ENCODE measurements at regions of chr21 and their contacts with region 1.

Region 1: DNA sequence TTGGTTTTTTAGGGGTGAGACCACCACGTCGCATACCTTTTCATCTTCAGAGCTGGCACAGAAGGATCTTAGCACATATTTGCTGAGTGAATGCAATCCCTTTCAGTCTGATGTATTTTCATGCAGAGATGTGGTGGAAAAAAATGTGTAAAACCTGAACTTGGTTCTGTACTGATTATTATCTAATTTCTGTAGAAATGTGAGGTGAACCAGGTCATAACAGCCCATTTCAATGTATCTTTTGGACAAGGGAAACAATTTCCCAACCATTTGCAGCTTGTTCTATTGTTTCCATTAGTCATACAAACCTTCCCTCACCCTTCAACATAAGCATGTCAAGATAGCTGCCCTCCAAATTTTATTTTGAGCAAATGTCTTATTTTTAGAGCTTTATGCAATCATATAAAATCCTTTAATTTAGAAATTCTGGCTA is 46.8 kb upstream of the RUNX1 start:
- DNase-seq: no peak
- H3K4me3 Mint-ChIP-seq: no peak overlapping the region
- H3K27ac Mint-ChIP-seq: peak overlapping the region; percentile 67
- H3K4me1 Mint-ChIP-seq: peaks cover 42% of the 10 kb centered on the region
- H3K27me3 Mint-ChIP-seq: no peaks in the 10 kb centered on the region

Region 2: DNA sequence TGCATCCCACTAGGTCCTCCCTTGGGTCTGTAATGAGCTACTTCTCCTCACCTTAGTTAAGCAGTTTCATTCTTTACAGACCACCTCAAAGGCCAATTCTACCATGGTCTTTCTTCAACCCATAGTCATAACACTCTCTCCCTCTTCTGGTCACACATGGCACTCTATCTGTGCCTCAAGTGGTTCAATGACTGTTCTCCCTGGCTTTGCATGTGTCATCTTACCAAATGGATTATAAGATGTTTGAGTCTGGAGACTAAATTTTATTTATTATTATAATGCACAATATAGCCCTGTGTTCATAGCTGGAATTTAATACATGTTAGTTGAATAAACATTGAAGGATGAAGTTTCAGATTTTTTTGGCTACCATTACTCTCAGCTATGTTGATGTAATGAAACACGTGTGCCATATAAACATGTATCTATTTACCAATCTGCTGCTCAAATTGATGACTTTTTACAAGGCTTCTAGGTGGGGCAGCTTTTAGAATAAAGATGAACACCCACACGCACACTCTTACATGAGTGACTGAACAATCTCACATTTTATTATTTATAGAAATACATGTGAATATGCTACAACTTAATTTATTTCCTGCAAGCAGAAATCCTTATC is 148.8 kb before region 1 on chr21:
- intact Hi-C with region 1: loop called (anchors 2 kb)
- DNase-seq: no peak
- H3K4me3 Mint-ChIP-seq: no peak overlapping the region
- H3K27ac Mint-ChIP-seq: peak overlapping the region; percentile 90
- H3K4me1 Mint-ChIP-seq: peaks cover 62% of the 10 kb centered on the region
- H3K27me3 Mint-ChIP-seq: no peaks in the 10 kb centered on the region

Region 3: DNA sequence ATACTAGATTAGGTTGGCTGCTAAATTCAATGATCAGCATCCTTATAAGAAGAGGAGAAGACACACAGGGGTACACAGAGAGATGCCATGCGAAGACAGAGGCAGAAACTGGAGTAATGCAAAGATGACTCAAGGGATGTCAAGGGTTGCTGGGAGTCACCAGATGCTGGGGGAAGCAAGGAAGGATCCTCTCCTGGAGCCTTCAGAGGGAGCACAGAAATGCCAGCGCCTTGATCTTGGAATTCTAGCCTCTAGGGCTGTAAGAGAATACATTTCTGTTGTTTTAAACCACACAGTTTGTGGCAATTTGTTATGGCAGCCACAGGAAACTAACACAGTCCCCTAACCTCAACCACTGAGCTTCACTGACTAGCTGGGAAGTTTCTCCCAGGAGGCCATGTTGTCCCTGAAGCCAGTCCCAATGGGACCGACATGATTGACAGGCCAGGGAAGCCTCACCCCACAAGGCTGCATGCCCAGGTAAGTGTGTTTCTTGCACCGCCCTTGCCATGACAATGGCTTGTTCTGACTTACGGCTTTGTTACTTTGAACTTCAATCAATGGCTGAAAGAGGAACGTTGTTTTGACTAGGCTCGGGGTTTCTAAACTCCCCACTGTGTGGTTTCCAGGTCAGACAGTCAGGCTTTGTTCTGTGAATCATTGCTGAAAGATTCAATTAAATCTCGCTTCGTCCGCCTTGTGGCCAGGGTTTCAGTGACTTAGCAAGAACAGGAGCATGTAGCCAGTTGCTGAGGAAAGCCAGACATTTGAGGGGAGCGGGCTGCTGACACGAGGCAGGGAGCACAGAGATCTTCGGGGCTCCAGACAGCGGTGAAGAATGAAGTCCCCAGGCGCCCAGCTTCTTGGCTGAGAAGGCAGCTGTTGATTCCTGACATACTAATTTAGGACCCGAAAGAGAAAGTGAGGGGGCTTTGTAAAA is 109.0 kb before region 1 on chr21:
- intact Hi-C with region 1: loop called (anchors 2 kb)
- DNase-seq: peak; percentile 70
- H3K4me3 Mint-ChIP-seq: peak overlapping the region; percentile 62
- H3K27ac Mint-ChIP-seq: peak overlapping the region; percentile 97
- H3K4me1 Mint-ChIP-seq: peaks cover 92% of the 10 kb centered on the region
- H3K27me3 Mint-ChIP-seq: no peaks in the 10 kb centered on the region

Region 4: GRCh38 chr21:35138665-35139381 is 42.9 kb after region 1 on chr21:
- intact Hi-C with region 1: loop called (anchors 1 kb)
- DNase-seq: no peak
- H3K4me3 Mint-ChIP-seq: peak overlapping the region; percentile 62
- H3K27ac Mint-ChIP-seq: peak overlapping the region; percentile 93
- H3K4me1 Mint-ChIP-seq: peaks cover 27% of the 10 kb centered on the region
- H3K27me3 Mint-ChIP-seq: no peaks in the 10 kb centered on the region

Region 5: DNA sequence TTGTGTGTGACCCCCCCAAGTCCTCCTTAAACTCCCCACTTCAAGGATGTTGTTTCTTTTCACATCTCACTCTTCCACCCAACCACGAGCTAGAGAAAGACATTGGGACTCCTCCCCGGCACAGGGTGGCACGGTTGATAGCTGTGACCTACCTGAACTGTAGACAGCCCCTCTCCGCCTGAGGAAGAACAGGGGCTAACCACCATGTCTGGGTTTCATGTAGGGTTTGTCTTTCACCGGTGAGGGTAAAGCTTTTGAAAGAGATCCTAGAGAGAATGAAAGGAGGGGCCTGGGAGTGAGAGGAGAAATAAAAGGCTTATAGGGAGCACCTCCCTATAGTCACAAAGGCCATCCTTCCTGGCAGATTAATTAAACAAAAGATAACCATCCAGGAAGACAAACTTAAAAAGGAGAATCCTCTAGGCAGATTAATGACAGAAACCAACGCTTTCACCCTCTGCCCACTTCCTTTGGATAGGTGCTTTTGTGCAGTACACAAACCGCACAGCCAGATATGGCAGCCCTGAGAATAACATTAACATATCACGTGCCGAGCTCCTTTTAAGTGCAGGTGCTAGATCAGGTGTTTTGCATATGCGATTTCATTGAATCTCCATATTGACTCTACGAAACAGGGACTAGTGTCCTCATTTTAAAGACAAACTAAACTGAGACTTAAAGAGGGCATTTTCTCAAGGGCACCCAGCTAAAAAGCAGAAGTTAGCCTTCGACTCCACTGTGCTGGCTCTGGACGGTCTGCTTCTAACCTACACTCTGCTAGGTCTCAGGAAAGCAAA is 131.3 kb after region 1 on chr21:
- intact Hi-C with region 1: loop called (anchors 1 kb)
- DNase-seq: peak; percentile 42
- H3K4me3 Mint-ChIP-seq: peak overlapping the region; percentile 27
- H3K27ac Mint-ChIP-seq: peak overlapping the region; percentile 6
- H3K4me1 Mint-ChIP-seq: peaks cover 41% of the 10 kb centered on the region
- H3K27me3 Mint-ChIP-seq: peaks cover 10% of the 10 kb centered on the region

Region 6: DNA sequence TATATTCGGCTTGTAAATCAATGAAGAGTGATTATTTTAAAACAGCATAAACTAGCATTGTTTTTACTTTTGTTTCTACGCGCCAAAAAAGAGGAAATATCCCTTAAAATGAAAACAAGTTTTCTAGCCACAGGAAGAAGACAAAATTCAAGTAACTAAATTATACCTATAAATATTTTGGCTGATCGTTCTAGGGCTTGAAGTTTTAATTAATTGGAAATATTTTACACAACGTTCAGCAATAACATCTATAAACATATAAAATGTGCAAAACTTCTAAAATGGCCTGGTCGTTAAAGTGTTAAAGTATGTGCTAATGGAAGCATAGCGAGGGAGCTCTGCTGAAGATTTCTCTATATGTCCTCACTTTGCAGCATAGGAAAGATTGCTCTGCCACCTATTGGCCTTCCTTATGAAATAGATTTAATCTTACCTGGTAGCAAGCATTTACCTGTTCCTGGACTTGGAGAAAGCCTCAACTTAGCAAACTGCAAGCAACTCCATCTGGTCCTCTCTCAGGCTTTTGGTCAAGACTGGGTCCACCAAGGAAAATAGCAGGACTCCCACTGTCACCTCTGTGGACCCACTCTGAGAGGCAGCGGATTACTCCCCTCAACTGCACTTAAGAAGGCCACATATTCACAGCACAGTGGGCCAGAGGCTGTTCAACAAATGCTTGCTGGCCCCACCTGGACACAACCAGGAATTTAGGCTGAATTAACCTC is 304.5 kb after region 1 on chr21:
- intact Hi-C with region 1: loop called (anchors 1 kb)
- DNase-seq: peak; percentile 9
- H3K4me3 Mint-ChIP-seq: no peak overlapping the region
- H3K27ac Mint-ChIP-seq: no peak overlapping the region
- H3K4me1 Mint-ChIP-seq: peaks cover 23% of the 10 kb centered on the region
- H3K27me3 Mint-ChIP-seq: no peaks in the 10 kb centered on the region